Posterior vena cava (tissue), 2 donors: ENCODE measurements at regions of chr10 and their contacts with region 1.

Region 1: GRCh38 chr10:32958085-32959005 is at the start of gene ITGB1:
- DNase-seq: peak; percentile 99
- total RNA-seq, gene ITGB1: 1,298 to 1,367 TPM

Region 2: GRCh38 chr10:32982911-32983909 is 24.9 kb after region 1 on chr10:
- intact Hi-C with region 1: loop called in 1 of 2 experiments (anchors 2 kb)
- DNase-seq: no peak

Region 3: GRCh38 chr10:33008499-33009243 is 50.3 kb after region 1 on chr10:
- intact Hi-C with region 1: loop called in 1 of 2 experiments (anchors 2 kb)
- DNase-seq: no peak

Region 4: GRCh38 chr10:33180390-33180789 is 222.0 kb after region 1 on chr10:
- intact Hi-C with region 1: no loop called
- DNase-seq: no peak